A673 (cell line): ENCODE measurements at regions of chr1 and their contacts with region 1.

Region 1: DNA sequence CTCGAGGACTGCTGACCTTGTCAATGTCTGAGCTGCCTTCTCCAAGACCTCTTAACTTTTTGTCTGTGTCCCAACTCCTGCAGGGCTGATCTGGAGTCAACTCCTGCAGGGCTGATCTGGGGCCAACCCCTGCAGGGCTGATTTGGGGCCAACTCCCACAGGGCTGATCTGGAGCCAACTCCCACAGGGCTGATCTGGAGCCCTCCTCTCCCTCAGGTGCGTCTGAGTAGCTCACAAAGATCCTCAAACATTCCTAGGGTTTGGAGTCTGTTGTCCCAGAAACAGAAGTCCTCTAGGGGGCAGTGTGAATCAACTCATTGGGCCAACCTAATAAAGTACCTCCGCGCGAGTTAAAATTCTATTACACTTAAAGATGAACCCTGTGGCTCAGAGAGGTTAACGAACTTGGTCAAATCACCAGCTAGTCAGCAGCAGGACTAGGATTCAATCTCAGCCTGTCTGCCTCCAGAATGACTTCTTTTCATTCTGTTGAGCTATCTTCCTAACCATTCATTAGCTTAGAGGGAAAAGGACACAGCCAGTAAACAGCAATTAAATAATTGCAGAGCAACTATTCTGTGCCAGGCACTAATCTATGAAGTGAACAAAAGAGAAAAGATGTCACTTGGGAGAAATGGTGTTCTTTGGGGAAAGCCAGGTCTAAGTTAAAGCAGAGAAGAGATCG is 17.2 kb upstream of the RLF start:
- DNase-seq: peak; percentile 84
- H3K4me3 ChIP-seq: no peak overlapping the region
- H3K27ac ChIP-seq: no peak overlapping the region
- H3K4me1 ChIP-seq: no peaks in the 10 kb centered on the region
- H3K27me3 ChIP-seq: peaks cover 31% of the 10 kb centered on the region
- CTCF ChIP-seq: peak; percentile 85

Region 2: DNA sequence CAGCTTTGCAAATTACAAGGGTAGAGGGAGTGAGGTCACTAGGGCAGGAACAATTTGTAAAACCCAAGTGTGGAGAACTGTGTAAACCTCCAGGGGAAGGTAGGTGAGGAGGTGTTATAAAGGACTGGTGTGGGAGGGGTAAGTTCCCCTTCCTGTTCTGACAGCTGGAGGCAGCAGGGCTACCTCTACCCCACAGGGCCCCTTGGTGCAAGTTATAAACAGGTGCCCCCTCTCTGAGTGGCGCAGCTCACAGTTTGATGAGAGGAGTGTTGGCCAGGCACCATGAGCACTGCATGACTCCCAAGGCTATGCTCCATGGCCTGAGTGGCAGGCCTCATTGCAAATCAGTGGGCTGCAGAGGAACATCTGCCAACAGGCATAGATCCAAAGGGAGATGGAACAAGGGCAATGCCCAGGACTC is 148.1 kb before region 1 on chr1:
- CTCF ChIA-PET with region 1: no interaction called
- POLR2A ChIA-PET with region 1: no interaction called
- intact Hi-C with region 1: no loop called
- DNase-seq: no peak
- H3K4me3 ChIP-seq: no peak overlapping the region
- H3K27ac ChIP-seq: no peak overlapping the region
- H3K4me1 ChIP-seq: no peaks in the 10 kb centered on the region
- H3K27me3 ChIP-seq: no peaks in the 10 kb centered on the region
- CTCF ChIP-seq: no peak

Region 3: GRCh38 chr1:40178200-40178599 is 34.2 kb after region 1 on chr1:
- CTCF ChIA-PET with region 1: interaction called, 10 read pairs
- POLR2A ChIA-PET with region 1: no interaction called
- intact Hi-C with region 1: no loop called
- DNase-seq: no peak
- H3K4me3 ChIP-seq: no peak overlapping the region
- H3K27ac ChIP-seq: no peak overlapping the region
- H3K4me1 ChIP-seq: peaks cover 8% of the 10 kb centered on the region
- H3K27me3 ChIP-seq: no peaks in the 10 kb centered on the region
- CTCF ChIP-seq: no peak

Region 4: DNA sequence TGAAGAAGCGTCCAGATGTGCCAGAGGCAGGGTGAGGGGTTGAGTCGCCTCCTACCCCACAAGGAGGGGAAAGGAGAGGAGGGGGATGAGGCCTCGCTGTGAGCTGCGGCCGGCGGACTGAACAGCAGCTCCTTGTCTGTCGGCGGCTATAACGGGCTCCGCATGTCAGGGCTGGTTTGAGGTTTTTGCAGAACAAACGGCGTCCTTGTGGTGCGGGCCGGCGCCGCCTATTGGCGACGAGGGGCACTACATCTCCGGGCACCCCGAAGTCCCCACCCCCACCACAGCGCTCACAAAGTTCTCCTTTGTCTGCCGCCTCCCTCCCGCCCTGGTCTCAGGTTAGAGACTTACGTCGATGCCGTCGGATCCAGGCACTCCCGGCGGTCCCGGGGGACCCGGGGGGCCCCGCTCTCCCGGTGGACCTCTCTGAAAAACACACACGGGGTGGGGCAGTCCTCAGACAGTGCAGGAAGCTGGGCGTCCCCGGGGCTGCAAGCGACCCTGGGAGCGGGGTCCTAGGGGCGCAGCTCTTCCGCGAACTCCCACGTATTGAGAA is 171.3 kb after region 1 on chr1:
- CTCF ChIA-PET with region 1: interaction called, 12 read pairs
- POLR2A ChIA-PET with region 1: no interaction called
- intact Hi-C with region 1: no loop called
- DNase-seq: peak; percentile 92
- H3K4me3 ChIP-seq: peak overlapping the region; percentile 56
- H3K27ac ChIP-seq: peak overlapping the region; percentile 43
- H3K4me1 ChIP-seq: peaks cover 12% of the 10 kb centered on the region
- H3K27me3 ChIP-seq: no peaks in the 10 kb centered on the region
- CTCF ChIP-seq: peak; percentile 90

Region 5: DNA sequence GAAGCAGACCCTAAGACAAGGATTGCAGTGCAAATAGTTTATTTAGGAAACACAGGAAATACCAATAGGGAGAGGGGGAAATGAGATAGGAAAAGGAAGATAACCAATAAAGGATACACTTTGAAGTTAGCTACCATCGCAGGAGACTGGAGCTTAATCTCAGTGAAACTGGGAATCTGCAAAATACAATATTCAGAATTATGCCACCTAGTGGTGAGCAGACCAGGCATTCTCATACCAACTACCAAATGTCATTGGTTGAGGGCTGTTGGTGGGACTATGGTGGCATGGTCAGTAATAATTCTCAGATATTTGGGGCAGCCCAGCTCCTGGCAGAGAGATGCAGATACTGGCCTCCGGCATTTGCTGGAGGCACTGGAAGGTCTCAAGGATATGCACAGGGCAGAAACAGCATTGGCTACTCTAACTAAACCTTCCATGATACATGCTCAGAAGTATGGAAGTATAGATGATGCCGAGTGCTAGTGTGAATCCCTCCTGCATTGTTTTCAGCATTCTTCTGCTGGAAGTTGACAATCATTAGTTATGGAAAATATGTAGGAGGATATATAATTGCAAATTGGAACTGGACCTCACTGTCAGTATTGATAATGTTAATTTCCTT is 294.5 kb after region 1 on chr1:
- CTCF ChIA-PET with region 1: interaction called, 22 read pairs
- POLR2A ChIA-PET with region 1: no interaction called
- intact Hi-C with region 1: loop called (anchors 10 kb)
- DNase-seq: peak; percentile 56
- H3K4me3 ChIP-seq: no peak overlapping the region
- H3K27ac ChIP-seq: no peak overlapping the region
- H3K4me1 ChIP-seq: no peaks in the 10 kb centered on the region
- H3K27me3 ChIP-seq: no peaks in the 10 kb centered on the region
- CTCF ChIP-seq: peak; percentile 87